ENCODE measurements at regions of chr1 and their contacts with region 1.

Region 1: GRCh38 chr1:231757101-231757404 is 130.5 kb downstream of the DISC1 start:
- DNase-seq: no peak
- H3K4me3 ChIP-seq: no peak overlapping the region
- CTCF ChIP-seq: no peak

Region 2: GRCh38 chr1:231776010-231776756 is 19.1 kb after region 1 on chr1:
- CTCF ChIA-PET with region 1: interaction called, 69 read pairs
- POLR2A ChIA-PET with region 1: no interaction called
- DNase-seq: peak; percentile 89
- H3K4me3 ChIP-seq: no peak overlapping the region
- CTCF ChIP-seq: peak; percentile 0

Region 3: DNA sequence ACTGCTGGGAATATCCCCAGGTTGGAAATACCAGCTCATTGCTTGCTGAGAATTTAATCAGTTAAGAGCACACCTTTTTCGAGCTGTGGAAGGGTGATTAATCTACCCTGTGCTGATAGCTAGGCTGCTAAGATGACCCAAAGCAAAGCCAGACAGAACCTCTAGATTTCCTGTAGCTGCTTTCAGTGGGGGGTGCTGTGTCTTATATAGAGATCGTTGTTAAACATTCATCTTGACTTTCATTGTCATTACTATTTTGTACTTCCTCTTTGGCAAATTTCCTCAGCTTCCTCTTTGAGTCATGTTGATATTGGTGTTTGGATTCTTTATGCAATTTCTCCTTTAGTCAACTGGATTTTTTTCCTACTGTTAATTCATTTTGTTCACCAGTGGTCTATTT is 24.8 kb after region 1 on chr1:
- CTCF ChIA-PET with region 1: interaction called, 69 read pairs
- POLR2A ChIA-PET with region 1: no interaction called
- DNase-seq: no peak
- H3K4me3 ChIP-seq: no peak overlapping the region
- CTCF ChIP-seq: no peak

Region 4: GRCh38 chr1:231806623-231807495 is 49.8 kb after region 1 on chr1:
- CTCF ChIA-PET with region 1: interaction called, 27 read pairs
- POLR2A ChIA-PET with region 1: no interaction called
- DNase-seq: no peak
- H3K4me3 ChIP-seq: no peak overlapping the region
- CTCF ChIP-seq: peak; percentile 45

Measured in AG04449 (cell line).